Activated naive CD4-positive, alpha-beta T cell treated with anti-CD3 and anti-CD28 coated beads for 36 hours (primary cell): ENCODE measurements at regions of chr18 and their contacts with region 1.

Region 1: GRCh38 chr18:35497370-35498197 is at the start of gene INO80C:
- DNase-seq: peak; percentile 93
- H3K4me3 Mint-ChIP-seq: peak within 1 kb of the TSS; percentile 96
- H3K27ac Mint-ChIP-seq: peak within 1 kb of the TSS; percentile 99
- H3K4me1 Mint-ChIP-seq: peaks cover 23% of the 10 kb centered on the region
- H3K27me3 Mint-ChIP-seq: no peaks in the 10 kb centered on the region
- total RNA-seq, gene INO80C: 34.4 to 36.6 TPM

Region 2: GRCh38 chr18:34976899-34977837 is 520.4 kb before region 1 on chr18:
- CTCF ChIA-PET with region 1: no interaction called
- intact Hi-C with region 1: loop called (anchors 2 kb)
- DNase-seq: peak; percentile 79
- H3K4me3 Mint-ChIP-seq: peak overlapping the region; percentile 85
- H3K27ac Mint-ChIP-seq: no peak overlapping the region
- H3K4me1 Mint-ChIP-seq: peaks cover 23% of the 10 kb centered on the region
- H3K27me3 Mint-ChIP-seq: peaks cover 5% of the 10 kb centered on the region

Region 3: DNA sequence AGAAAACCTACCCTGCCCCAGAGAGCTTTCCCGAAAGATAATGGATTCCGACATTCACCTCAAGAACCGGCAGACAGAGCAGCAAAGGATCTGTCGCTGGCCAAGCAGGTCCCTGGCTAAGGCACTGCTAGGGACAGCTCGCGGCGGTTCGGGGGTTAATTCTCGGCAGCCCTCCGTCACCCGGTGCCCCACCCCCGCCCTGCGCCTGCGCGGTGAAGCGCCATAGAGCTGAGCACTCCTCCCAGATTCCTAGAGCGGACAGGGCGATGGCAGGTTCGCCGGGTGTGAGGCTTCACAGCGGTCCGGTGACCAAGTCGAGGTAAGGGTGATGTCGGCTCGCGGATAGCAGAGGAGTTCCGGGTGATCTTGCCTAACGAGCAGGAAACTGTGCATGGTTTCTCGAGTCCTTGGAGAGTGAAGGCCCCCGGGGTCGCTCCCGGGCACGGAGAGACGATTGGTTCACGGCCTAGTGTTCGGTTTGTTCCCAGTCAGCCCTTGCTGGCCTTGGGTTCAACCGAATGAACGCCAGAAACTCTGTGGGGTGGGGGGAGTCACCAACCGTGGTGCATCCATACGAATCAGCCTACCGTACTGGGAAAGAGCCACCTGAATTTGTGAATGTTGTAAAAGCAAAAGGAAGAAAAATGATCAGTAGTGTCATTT is 207.4 kb before region 1 on chr18 and contains the start of gene ZSCAN30:
- CTCF ChIA-PET with region 1: no interaction called
- intact Hi-C with region 1: loop called (anchors 5 kb)
- DNase-seq: peak; percentile 96
- H3K4me3 Mint-ChIP-seq: peak within 1 kb of the TSS; percentile 96
- H3K27ac Mint-ChIP-seq: peak within 1 kb of the TSS; percentile 97
- H3K4me1 Mint-ChIP-seq: peaks cover 48% of the 10 kb centered on the region
- H3K27me3 Mint-ChIP-seq: peaks cover 2% of the 10 kb centered on the region
- total RNA-seq, gene ZSCAN30: 12.0 to 14.3 TPM

Region 4: GRCh38 chr18:35415511-35416073 is 82.0 kb before region 1 on chr18:
- CTCF ChIA-PET with region 1: no interaction called
- intact Hi-C with region 1: loop called (anchors 1 kb)
- DNase-seq: no peak
- H3K4me3 Mint-ChIP-seq: peak overlapping the region; percentile 48
- H3K27ac Mint-ChIP-seq: no peak overlapping the region
- H3K4me1 Mint-ChIP-seq: peaks cover 38% of the 10 kb centered on the region
- H3K27me3 Mint-ChIP-seq: no peaks in the 10 kb centered on the region

Region 5: GRCh38 chr18:35535297-35535696 is 37.7 kb after region 1 on chr18:
- CTCF ChIA-PET with region 1: no interaction called
- intact Hi-C with region 1: no loop called
- DNase-seq: no peak
- H3K4me3 Mint-ChIP-seq: no peak overlapping the region
- H3K27ac Mint-ChIP-seq: no peak overlapping the region
- H3K4me1 Mint-ChIP-seq: no peaks in the 10 kb centered on the region
- H3K27me3 Mint-ChIP-seq: peaks cover 6% of the 10 kb centered on the region

Region 6: DNA sequence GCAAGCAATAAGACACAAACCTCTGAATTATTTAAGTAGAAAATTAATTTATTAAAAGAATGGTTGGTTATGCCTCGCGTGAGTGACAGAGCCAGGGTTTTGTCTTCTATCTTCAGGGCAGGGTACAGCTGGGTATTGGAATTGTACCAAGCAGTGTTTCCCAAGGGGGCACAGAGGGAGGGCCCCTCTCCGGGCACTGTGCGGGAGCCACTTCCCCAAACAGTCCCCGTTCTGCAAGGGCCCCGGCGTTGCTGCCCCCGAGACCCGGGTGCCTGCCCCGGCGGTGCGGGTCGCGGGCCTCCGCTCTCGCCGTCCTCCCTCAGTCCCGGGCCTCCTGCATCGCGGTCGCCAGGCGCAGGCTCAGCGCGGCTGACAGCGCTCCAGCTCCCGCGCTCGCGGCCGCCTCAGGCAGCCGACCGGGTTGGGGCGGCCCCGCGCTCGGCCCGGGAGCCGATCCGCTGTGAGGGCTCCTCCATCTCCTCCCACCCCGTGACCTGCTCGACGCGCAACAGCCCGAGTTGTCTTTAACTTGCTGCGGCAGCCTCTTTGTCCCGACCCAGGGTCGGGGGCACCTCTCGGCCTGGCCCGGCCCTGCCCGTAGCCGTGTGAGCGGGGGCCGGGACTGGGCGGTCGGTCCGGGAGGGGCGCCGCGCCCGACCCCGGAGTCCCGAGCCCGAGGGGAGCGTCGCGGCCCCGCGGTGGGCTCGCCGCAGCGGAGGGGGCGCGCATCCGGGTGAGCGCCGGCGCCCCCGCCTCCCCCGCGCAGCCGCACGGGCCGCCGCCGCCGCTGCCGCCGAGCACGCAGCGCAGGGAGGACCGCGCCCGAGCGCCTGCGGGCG is 83.3 kb after region 1 on chr18:
- CTCF ChIA-PET with region 1: interaction called, 3 read pairs
- intact Hi-C with region 1: loop called (anchors 1 kb)
- DNase-seq: peak; percentile 51
- H3K4me3 Mint-ChIP-seq: peak overlapping the region; percentile 74
- H3K27ac Mint-ChIP-seq: peak overlapping the region; percentile 71
- H3K4me1 Mint-ChIP-seq: peaks cover 45% of the 10 kb centered on the region
- H3K27me3 Mint-ChIP-seq: peaks cover 15% of the 10 kb centered on the region

Region 7: GRCh38 chr18:35972197-35973052 is 474.8 kb after region 1 on chr18 and contains the start of gene RMP24:
- CTCF ChIA-PET with region 1: no interaction called
- intact Hi-C with region 1: loop called (anchors 1 kb)
- DNase-seq: peak; percentile 96
- H3K4me3 Mint-ChIP-seq: peak within 1 kb of the TSS; percentile 97
- H3K27ac Mint-ChIP-seq: peak within 1 kb of the TSS; percentile 96
- H3K4me1 Mint-ChIP-seq: peaks cover 48% of the 10 kb centered on the region
- H3K27me3 Mint-ChIP-seq: no peaks in the 10 kb centered on the region